GM13977 (cell line): ENCODE measurements at regions of chr6 and their contacts with region 1.

Region 1: GRCh38 chr6:35452186-35453090 is at the start of gene FANCE:
- DNase-seq: peak; percentile 97
- CTCF ChIP-seq: no peak

Region 2: DNA sequence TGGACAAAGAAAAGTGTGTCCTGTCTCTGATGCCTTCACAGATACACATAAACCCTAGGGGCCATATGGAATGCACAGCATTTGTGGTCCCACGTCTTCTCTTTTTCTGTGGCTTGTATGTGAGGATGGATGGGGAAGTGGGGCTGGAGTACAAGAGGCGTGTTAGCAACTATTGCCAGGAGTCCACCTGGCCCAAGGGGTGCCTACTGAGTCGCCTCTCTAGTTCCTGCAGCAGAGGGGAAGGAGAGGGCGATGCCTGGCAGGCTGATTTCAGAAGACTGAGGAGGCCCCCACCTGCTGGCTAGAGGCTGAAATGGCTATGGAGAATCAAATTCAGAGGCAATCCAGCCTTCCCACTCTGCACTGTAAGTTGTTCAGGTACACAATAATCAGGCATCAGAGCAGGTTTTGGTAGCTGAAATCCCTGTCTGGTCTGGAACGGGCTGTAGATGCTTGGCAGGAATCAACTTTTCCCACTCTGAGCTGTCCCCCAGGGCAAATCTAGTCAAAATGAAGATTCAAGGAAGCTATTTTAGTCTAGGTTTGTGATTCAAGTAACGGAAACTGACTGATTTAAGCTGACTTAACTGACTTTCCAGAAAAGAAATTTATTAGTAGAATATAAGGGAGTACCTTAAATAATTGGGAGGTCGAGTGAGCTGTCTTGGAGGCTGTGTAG is 125.0 kb before region 1 on chr6:
- in situ Hi-C with region 1: loop called (anchors 10 kb)
- DNase-seq: peak; percentile 79
- CTCF ChIP-seq: peak; percentile 74

Region 3: DNA sequence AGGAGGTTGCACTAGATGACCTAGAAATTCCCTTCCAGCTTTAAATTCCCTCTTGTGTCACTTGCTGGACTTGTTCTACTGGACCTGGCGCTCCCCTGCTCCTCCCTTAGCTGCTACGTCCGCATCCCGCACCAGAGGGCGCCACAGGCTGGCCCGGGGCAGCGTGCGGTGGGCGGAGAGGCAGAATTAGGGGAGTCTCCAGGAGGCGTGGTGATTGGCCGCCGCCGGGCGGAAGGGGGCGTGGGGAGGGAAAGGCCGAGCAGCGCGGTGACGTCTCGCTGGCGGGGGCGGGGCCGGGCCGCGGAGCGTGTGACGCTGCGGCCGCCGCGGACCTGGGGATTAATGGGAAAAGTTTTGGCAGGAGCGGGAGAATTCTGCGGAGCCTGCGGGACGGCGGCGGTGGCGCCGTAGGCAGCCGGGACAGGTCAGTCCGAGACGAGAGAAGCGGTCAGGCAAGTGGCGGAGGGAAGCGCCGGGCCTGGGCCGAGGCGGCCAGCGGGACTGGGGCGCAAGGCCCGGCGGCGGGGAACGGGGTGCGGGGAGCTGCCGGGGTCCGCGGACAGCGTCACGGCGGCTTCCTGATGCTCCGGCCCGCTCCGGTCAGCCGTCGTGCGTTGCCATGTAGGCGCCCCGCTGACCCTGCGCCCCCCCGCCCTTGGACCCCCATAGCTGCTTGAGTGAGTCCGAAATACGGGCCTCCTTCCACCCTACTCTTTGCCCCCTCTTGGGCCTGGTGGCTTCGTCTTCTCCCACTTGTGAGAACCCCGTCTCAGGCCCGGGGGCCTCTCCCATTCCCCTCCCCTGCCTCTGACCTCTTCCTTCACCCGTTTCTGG is 110.0 kb before region 1 on chr6 and contains the start of gene PPARD:
- in situ Hi-C with region 1: loop called (anchors 10 kb)
- DNase-seq: peak; percentile 100
- CTCF ChIP-seq: peak; percentile 99

Region 4: DNA sequence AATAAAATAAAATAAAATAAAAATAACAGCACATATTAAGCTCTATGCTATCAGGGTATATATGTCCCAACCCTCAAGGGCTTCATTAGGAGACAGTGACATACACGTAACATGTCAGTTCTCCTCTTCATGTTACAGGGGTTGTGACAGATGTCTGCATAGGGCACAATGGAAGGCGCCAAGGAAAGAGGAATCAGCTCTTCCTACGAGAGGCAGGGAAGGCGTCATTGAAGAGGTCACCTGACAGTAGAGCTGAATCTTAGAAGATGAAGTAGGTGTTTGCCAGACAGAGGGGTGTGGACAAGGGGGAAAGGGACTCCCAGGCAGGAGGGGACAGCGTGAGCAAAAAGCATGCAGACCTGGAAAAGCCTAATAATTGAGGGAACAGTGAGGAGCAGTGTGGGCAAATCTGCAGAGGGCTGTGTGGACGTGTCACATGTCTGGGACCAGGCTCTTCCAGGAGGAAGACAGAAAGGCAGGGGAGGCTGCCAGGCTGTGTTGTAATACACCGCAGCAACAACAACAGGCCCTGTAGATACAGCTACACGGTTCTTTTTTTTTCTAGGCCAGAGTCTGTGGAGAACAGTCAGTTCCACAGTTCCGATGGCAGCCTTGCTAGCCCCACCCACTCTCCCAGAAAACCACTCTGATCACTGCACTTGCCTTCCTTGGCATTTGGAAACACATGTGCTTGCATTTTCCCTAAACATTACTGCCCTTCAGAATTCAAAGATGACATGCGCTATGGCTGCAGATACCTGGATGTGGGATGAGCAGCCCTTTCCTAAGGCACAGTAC is 238.8 kb after region 1 on chr6:
- in situ Hi-C with region 1: no loop called
- DNase-seq: no peak
- CTCF ChIP-seq: no peak

Region 5: GRCh38 chr6:35736253-35736894 is 283.9 kb after region 1 on chr6:
- in situ Hi-C with region 1: no loop called
- DNase-seq: peak; percentile 81
- CTCF ChIP-seq: peak; percentile 92